ENCODE measurements at regions of chr22 and their contacts with region 1.

Region 1: DNA sequence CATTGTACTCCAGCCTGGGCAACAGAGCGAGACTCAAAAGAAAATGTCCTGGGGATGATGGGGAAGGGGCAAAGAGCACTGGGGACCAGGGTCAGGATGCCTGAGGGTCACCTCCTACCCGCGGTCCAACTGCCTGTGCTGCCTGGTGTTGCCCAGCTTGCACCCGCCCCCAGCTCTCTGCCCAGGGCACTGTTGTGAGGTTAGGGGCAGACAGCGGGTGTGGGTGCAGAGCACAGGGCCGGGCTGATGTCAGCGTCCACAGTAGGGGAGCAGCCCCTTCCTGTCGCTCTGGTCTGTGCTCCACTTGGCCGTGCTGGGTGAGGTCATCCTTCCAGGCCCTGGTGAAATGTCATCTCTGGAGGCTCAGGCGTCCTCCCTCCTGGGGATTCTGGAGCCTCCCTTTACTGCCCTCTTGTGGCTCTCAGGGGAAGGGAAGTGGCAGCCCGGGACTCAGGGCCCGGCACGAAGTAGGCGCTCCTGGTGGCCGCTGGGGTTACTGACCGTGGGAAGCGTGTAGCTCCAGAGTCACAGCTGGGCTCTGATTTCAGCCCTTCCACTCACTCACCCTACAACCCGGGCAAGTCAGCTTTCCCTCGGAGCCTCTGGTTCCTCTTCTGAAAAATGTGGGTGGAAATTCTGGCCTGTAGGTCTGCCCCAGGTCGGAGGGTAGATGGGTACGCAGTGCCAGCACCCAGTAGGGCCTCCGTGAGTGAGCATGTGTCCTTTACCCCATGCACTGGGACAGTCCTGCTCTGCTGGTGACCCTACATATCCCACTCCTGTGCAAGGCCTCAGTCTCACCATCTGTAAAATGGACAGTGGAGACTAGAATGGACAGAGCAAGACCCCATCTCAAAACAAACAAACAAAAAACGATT is 17.3 kb upstream of the PRR5 start:
- DNase-seq: peak; percentile 92
- ATAC-seq: peak; percentile 89
- H3K4me3 Mint-ChIP-seq: no peak overlapping the region
- H3K27ac Mint-ChIP-seq: no peak overlapping the region
- H3K4me1 Mint-ChIP-seq: peaks cover 10% of the 10 kb centered on the region
- H3K27me3 Mint-ChIP-seq: peaks cover under 1% of the 10 kb centered on the region; the same call in 1 of the 2 replicates
- CTCF ChIP-seq: peak; percentile 90

Region 2: DNA sequence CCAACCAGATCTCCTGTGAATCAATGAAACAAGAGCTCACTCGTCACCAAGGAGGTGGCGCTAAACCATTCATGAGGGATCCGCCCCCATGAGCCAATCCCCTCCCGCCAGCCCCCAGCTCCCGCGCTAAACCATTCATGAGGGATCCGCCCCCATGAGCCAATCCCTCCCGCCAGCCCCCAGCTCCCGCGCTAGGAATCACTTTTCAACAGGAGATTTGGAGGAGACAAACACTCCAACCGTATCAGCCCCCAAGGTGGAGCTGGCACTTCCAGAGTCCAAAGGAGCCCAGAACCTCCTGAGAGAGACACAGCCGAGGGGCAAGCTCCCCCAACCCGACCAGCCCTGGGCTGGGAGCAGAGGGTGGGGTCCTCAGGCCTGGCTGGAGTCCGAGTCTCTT is 23.7 kb before region 1 on chr22:
- CTCF ChIA-PET with region 1: interaction called, 26 read pairs
- POLR2A ChIA-PET with region 1: no interaction called
- DNase-seq: peak; percentile 70
- ATAC-seq: peak; percentile 87
- H3K4me3 Mint-ChIP-seq: peak overlapping the region; percentile 51
- H3K27ac Mint-ChIP-seq: no peak overlapping the region
- H3K4me1 Mint-ChIP-seq: peaks cover 14% of the 10 kb centered on the region
- H3K27me3 Mint-ChIP-seq: peaks cover 14% of the 10 kb centered on the region
- CTCF ChIP-seq: no peak

Region 3: DNA sequence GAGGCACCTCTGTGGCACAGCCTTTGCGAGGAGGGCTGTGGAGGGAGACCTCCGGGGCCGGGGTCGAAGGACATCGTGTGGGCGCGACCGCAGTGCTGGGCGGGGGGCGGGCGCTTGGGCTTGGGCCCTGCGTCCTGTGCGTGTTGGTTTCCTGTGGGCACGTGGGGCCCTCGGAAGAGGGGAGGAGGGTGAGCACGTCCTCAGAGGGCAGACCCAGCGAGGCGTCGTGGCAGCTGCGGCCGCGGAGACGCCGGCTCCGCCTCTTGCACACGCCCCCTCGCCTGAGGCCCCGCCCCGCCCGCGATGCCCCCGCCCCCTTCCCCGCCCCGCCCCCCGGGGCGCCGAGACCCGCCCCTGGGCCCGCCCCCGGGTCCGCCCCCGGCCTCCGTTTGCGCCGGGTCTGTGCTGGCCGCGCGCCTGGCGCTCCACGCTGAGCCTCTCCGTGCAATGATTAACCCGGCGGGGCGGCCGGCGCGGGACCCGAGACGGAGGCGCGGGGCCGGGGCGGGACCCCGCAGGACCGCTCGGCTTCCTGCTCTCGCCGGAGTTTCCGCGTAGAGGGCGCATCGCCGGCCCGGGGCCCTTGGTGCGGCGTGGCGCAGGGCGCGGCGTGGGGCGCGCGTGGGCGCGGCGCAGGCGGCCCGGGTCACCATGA is 17.2 kb after region 1 on chr22 and contains the start of gene PRR5:
- CTCF ChIA-PET with region 1: interaction called, 32 read pairs
- POLR2A ChIA-PET with region 1: no interaction called
- DNase-seq: peak; percentile 64
- ATAC-seq: peak; percentile 64
- H3K4me3 Mint-ChIP-seq: peak within 1 kb of the TSS; percentile 70
- H3K27ac Mint-ChIP-seq: no peak within 1 kb of the TSS
- H3K4me1 Mint-ChIP-seq: peaks cover 20% of the 10 kb centered on the region
- H3K27me3 Mint-ChIP-seq: peaks cover 35% of the 10 kb centered on the region
- CTCF ChIP-seq: no peak
- total RNA-seq, gene PRR5: 12.3 to 15.6 TPM (median 13.6 TPM) in 3 replicates

Region 4: GRCh38 chr22:44735540-44736488 is 51.1 kb after region 1 on chr22:
- CTCF ChIA-PET with region 1: interaction called, 30 read pairs
- POLR2A ChIA-PET with region 1: no interaction called
- DNase-seq: peak; percentile 96
- ATAC-seq: peak; percentile 72
- H3K4me3 Mint-ChIP-seq: no peak overlapping the region
- H3K27ac Mint-ChIP-seq: no peak overlapping the region
- H3K4me1 Mint-ChIP-seq: peaks cover 16% of the 10 kb centered on the region
- H3K27me3 Mint-ChIP-seq: no peaks in the 10 kb centered on the region
- CTCF ChIP-seq: peak; percentile 99

Region 5: GRCh38 chr22:44776605-44777337 is 92.0 kb after region 1 on chr22:
- CTCF ChIA-PET with region 1: interaction called, 12 read pairs
- POLR2A ChIA-PET with region 1: no interaction called
- DNase-seq: no peak
- ATAC-seq: no peak; the same call in 1 of the 2 replicates
- H3K4me3 Mint-ChIP-seq: no peak overlapping the region
- H3K27ac Mint-ChIP-seq: peak overlapping the region; percentile 63
- H3K4me1 Mint-ChIP-seq: peaks cover 17% of the 10 kb centered on the region
- H3K27me3 Mint-ChIP-seq: no peaks in the 10 kb centered on the region
- CTCF ChIP-seq: no peak

Region 6: DNA sequence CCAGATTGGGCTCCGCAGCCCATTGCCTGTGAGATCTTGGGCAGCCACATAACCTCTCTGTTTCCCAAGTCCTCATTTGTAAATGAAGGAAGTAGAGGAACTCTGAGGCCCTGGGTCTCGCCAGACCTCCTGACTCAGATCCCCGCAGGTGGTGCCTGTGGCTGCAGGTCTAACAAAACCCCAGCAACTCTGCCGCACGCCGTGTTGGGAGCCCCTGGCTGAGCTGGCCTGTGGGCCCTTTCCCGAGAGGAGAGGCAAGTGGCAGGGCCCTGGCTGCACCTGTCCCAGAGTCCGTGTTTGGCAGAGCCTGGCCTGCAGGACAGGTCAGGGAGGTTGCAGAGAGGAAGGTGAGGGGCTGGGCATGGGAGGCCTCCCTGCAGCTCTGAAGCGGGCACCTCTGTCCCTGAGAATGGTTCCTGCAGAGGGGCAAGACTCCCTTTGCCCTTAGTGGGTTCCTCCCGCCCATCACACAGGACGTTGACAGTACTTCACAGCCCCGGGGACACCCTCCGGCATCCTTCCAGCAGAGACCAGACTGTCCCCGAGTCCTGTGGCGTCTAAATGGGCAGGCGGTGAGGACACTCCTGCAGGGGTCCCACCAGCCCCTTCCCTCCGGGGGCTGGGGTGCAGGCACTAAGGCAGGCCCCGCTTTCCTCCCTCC is 135.4 kb after region 1 on chr22:
- CTCF ChIA-PET with region 1: interaction called, 12 read pairs
- POLR2A ChIA-PET with region 1: no interaction called
- DNase-seq: no peak
- ATAC-seq: peak; percentile 24
- H3K4me3 Mint-ChIP-seq: no peak overlapping the region
- H3K27ac Mint-ChIP-seq: peak overlapping the region; percentile 92; the same call in 1 of the 2 replicates
- H3K4me1 Mint-ChIP-seq: peaks cover 23% of the 10 kb centered on the region
- H3K27me3 Mint-ChIP-seq: no peaks in the 10 kb centered on the region
- CTCF ChIP-seq: no peak